ENCODE measurements at regions of chr2 and their contacts with region 1.

Region 1: DNA sequence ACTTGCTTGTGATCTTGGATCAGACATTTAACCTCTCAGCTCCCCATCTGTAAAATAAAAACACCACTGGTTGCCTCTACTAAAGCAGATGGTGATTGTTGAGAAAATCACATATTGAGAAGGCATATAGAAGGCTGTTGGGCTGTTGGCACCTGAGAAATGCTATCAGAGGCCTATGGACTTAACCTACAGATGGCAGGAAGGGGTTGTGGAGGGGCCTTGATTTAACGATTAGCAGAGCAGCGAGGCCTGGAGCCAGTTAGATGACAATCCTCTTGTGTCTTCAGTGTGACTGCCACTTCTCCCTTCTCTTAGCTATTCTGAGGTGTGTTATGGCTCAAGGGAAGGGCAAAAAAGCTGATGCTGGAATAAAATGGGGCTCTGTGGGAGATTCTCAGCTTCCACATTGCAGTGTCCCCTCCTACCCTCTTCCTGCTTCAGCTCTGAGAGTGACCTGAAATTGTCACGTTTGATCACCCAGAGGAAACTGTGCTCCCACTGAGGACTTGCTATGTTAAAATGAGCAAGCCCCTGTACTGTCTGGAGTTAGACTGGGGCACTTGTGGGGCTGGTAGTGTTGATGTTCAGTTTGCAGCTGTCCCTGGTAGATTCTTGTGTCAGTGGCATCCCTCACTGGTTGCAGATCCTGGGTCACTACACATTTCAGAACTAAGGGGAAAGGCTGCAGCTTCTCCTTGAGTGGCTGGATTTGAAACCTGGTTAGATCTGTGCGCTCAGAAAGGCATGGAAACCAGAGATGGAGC is 31.5 kb downstream of the CXCR4 start:
- DNase-seq: no peak
- CTCF ChIP-seq: no peak

Region 2: GRCh38 chr2:136098441-136098840 is 12.0 kb after region 1 on chr2:
- CTCF ChIA-PET with region 1: interaction called, 11 read pairs
- POLR2A ChIA-PET with region 1: no interaction called
- DNase-seq: no peak
- CTCF ChIP-seq: no peak

Region 3: DNA sequence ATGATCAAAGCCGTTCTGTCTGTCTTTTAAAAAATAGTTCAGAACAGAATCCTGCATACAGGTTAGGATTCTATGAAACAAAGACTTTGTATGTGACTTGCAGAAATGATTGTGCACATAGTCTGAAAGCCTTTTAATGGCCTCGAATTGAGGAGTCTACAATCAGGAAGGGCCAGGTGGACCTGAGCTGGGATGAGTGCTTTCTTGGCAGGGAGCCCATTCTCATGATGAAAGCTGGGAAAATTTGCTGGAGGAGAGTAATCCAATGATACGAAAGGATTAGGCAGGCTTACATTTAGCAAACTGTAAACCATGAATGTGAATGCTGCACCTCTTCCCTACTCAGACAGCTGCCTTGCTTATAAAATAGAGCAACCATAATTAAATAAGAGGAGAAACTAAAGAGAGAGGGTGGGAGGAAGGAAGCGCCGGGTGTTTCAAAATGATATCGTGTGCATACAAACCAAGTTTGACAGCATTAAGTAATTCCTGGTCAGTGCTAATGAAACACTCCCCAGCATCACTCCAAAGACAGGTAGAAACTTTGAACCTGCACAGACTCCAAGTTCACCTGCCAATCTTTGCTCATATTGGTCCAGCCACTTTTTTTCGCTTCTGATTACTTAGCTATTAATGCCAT is 55.2 kb after region 1 on chr2:
- CTCF ChIA-PET with region 1: no interaction called
- POLR2A ChIA-PET with region 1: no interaction called
- DNase-seq: no peak
- CTCF ChIP-seq: no peak